ENCODE measurements at regions of chr1 and their contacts with region 1.

Region 1: DNA sequence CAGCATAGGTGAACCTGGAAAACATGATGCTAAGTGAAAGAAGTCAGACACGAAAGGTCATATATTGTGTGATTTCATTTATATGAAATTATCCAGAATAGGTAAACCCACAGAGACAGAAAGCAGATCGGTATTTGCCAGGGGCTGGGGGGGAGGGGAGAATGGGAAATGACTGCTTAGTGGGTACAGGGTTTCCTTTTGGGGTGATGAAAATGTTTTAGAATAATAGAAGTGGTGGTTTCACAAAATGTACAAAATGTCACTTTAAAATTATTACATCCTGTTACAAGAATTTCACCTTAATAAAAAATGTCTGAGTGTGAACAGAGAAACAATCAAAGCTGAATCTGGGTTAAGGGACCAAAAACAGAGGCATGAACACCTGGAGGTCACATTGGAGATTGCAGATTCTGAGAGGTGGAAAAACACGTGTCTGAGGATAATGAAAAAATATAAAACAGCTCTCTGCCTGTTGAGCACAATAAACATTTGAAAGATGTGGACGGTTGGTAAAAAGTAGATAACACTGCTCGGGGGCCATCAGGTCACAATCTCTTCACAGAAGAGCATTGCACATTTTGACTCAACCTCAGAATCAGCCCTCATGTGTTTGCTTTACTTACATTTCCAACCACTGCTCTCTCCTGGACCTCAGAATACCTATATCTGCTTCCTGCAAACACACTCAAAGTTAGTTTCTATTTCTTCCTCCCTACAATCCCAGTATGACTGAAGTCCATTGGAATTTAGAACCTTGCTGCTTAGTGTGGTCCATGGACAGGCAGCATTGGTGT is 3.2 kb downstream of the SLAMF6 start:
- DNase-seq: peak; percentile 76
- H3K4me3 Mint-ChIP-seq: peak overlapping the region; percentile 94
- H3K27ac Mint-ChIP-seq: peak overlapping the region; percentile 91
- H3K4me1 Mint-ChIP-seq: peaks cover 79% of the 10 kb centered on the region
- H3K27me3 Mint-ChIP-seq: no peaks in the 10 kb centered on the region

Region 2: DNA sequence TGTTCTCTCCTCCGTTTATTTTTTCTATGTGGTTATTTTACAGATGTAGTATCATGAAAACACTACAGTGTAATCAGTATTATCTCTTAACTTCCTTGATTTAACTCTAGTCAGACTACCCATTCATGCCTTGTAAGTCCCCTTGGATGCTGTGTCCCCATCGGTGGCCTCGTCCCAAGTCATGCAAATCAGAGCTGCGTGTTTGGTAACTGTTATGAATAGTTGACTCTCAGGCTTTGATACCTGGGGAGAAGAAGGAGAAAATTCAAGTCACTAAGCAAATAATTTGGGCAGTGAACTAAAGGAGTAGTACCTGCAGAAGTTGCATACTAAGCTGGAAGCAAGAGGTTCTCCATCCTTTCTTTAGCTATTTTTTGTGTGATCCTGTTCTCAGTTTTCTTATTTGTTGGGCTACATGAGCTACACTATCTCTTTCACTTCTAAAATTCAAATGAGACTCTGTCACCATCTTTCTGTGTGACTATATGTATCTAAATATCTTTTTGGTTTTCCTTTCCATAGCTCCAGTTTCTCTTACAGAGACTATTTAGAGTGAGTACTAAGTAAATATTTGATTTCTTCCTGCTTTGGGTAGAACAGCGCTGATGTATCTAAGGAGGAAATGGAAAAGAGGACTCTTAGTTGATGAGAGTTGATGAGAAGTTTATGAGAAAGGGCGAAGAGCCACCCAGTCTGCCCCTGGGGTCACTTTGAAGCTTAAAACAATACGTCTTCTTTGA is 68.5 kb before region 1 on chr1:
- intact Hi-C with region 1: loop called (anchors 1 kb)
- DNase-seq: peak; percentile 60
- H3K4me3 Mint-ChIP-seq: peak overlapping the region; percentile 42
- H3K27ac Mint-ChIP-seq: peak overlapping the region; percentile 87
- H3K4me1 Mint-ChIP-seq: peaks cover 65% of the 10 kb centered on the region
- H3K27me3 Mint-ChIP-seq: no peaks in the 10 kb centered on the region

Region 3: GRCh38 chr1:160474392-160475242 is 45.2 kb before region 1 on chr1:
- intact Hi-C with region 1: loop called (anchors 2 kb)
- DNase-seq: peak; percentile 56
- H3K4me3 Mint-ChIP-seq: no peak overlapping the region
- H3K27ac Mint-ChIP-seq: no peak overlapping the region
- H3K4me1 Mint-ChIP-seq: peaks cover 12% of the 10 kb centered on the region
- H3K27me3 Mint-ChIP-seq: no peaks in the 10 kb centered on the region

Region 4: DNA sequence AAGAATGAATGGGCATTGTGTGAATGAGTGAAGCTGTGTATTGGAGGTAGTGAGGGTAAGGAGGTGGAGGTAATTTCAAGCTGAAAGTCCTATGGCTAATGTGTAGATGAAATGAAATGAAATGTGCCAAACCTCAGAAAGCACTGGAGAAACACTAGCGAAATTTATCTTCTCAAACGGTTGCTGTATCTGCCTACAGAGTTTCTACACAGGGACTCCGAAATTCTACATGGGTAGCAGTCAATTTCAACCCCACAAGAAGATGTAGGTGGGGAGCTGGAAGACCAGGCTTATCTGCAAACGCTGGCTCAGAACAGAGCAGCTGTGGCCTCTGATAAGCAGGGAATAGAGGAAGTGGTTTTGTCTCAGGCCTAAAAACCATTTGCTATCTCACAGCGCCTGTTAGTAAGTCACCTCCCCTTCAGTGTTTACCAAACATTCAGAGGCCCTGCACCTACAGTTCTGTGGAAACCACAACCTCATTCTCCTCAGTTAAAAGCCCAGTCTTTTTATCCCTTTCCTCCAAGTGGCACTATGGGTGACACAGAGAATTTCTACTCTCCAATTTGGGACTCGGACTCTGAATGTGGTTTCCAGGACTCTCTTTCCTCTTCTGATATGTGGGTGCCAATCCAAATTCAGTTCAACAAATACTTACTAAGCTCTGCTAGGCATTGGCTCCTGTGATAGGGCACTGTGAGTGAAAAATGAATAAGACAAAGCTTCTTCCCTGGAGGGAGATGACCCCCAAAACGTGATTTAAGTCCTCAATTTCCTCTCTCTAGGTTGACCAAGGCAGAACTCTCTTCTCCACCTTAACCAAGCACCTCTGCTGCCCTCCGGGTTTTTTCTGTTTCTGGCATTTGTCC is 20.4 kb after region 1 on chr1:
- intact Hi-C with region 1: loop called (anchors 1 kb)
- DNase-seq: peak; percentile 90
- H3K4me3 Mint-ChIP-seq: peak overlapping the region; percentile 72
- H3K27ac Mint-ChIP-seq: peak overlapping the region; percentile 91
- H3K4me1 Mint-ChIP-seq: peaks cover 45% of the 10 kb centered on the region
- H3K27me3 Mint-ChIP-seq: no peaks in the 10 kb centered on the region

Region 5: GRCh38 chr1:160550572-160551034 is 30.8 kb after region 1 on chr1:
- intact Hi-C with region 1: no loop called
- DNase-seq: peak; percentile 82
- H3K4me3 Mint-ChIP-seq: no peak overlapping the region
- H3K27ac Mint-ChIP-seq: no peak overlapping the region
- H3K4me1 Mint-ChIP-seq: peaks cover 23% of the 10 kb centered on the region
- H3K27me3 Mint-ChIP-seq: no peaks in the 10 kb centered on the region

Region 6: DNA sequence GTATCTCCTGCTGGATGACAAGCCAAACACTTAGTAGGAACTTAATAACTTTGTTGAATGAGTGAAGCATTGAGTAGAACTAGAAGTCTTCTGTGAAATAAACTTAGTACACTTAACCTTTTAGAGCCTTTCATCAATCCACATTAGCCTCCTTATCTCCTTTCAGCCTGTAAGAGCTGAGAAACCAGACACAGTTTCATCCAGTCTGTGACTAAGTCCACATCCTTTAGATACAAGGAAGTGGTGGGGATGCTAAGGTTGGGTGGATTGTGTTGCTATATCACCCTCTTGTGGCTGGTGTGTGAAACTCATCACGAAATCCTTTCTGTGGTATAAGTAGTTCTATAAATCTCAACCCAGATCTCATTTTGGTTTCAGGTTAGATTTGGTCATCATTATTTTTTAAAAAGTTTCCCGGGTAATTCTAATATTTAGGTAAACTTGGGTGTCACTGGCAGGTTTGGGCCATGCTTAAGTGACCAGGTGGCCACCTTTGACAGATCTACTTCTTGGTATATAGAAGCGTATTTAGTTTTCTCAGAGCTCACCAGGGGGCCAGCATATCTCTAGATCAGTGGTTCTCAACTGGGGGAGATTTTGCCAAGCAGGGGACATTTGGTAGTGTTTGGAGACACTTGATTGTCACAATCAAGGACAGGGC is 87.3 kb after region 1 on chr1:
- intact Hi-C with region 1: loop called (anchors 1 kb)
- DNase-seq: peak; percentile 91
- H3K4me3 Mint-ChIP-seq: peak overlapping the region; percentile 62
- H3K27ac Mint-ChIP-seq: peak overlapping the region; percentile 81
- H3K4me1 Mint-ChIP-seq: peaks cover 55% of the 10 kb centered on the region
- H3K27me3 Mint-ChIP-seq: no peaks in the 10 kb centered on the region

Region 7: GRCh38 chr1:160862203-160863060 is 342.6 kb after region 1 on chr1 and contains the start of gene CD244:
- intact Hi-C with region 1: no loop called
- DNase-seq: peak; percentile 81
- H3K4me3 Mint-ChIP-seq: peak within 1 kb of the TSS; percentile 24
- H3K27ac Mint-ChIP-seq: peak within 1 kb of the TSS; percentile 65
- H3K4me1 Mint-ChIP-seq: peaks cover 22% of the 10 kb centered on the region
- H3K27me3 Mint-ChIP-seq: peaks cover 2% of the 10 kb centered on the region
- total RNA-seq, gene CD244: not detected in 2 replicates

Region 8: DNA sequence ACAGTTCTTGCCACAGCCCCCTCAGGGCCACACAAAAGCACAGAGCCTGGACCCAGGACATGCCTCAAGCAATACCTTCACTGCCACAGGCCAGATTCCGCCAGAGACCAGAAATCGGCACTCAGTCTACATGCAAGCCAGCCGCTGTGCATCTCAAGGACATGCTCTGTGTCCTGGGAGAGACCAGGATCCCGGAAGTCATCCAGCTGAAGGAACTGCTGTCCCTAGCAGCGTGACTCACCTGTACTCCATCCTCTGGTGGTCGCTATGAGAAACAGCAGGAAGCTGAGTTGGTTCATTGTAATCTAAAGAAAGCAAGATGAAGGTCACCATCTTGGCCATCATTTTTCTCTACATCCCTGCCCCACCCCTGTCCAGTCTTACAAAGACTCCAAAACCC is 364.7 kb after region 1 on chr1:
- intact Hi-C with region 1: no loop called
- DNase-seq: peak; percentile 76
- H3K4me3 Mint-ChIP-seq: no peak overlapping the region
- H3K27ac Mint-ChIP-seq: no peak overlapping the region
- H3K4me1 Mint-ChIP-seq: peaks cover 5% of the 10 kb centered on the region
- H3K27me3 Mint-ChIP-seq: peaks cover 9% of the 10 kb centered on the region